ENCODE measurements at regions of chr21 and their contacts with region 1.

Region 1: DNA sequence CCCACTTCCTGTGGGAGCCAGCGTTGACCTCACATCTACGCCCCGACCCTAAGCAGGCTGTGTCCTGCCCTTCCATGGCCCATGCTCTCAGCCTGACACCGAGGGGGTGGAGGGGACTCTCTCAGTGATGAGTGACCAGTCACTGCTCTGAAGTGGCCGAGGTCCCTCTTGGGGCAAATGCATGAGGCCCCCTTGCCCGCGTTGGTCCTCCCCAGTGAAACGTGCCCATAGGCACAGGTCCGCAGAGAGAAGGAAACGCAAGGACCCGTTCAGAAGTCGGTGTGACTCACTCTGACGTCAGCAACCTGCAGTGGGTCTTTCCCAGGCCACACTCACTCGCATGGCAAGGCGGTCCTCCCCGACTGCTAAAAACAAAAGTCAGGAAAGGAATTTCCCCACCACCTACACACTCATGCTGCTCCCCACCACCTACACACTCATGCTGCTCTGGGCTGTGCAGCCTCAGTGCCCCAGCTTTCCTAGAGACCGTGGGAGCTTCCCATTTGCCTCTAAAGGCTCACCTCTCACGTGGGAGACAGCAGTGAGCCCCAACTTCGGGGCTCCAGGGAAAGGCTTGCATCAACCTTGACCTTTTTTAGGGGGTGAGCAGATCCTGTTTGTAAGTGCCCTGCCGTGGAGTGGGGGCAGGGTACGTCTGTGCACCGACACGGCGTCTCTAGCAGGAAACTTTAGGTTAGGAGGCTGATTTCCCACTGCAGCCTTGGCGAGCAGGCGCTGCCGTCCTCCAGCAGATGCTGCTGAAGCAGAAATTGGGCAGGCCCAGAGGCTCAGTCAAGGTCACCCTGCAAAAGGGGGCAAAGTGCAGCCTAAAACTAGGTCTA is 11.4 kb downstream of the UBASH3A start:
- DNase-seq: peak; percentile 99
- ATAC-seq: peak; percentile 71
- H3K4me3 Mint-ChIP-seq: peak overlapping the region; percentile 68
- H3K27ac Mint-ChIP-seq: no peak overlapping the region
- H3K4me1 Mint-ChIP-seq: peaks cover 27% of the 10 kb centered on the region
- H3K27me3 Mint-ChIP-seq: no peaks in the 10 kb centered on the region

Region 2: GRCh38 chr21:42062236-42063022 is 352.7 kb before region 1 on chr21:
- CTCF ChIA-PET with region 1: no interaction called
- POLR2A ChIA-PET with region 1: no interaction called
- intact Hi-C with region 1: loop called in 1 of 2 experiments (anchors 5 kb)
- DNase-seq: peak; percentile 86
- ATAC-seq: peak; percentile 65
- H3K4me3 Mint-ChIP-seq: peak overlapping the region; percentile 60
- H3K27ac Mint-ChIP-seq: peak overlapping the region; percentile 86
- H3K4me1 Mint-ChIP-seq: peaks cover 43% of the 10 kb centered on the region
- H3K27me3 Mint-ChIP-seq: no peaks in the 10 kb centered on the region

Region 3: GRCh38 chr21:42299324-42300044 is 115.7 kb before region 1 on chr21:
- CTCF ChIA-PET with region 1: no interaction called
- POLR2A ChIA-PET with region 1: no interaction called
- intact Hi-C with region 1: no loop called
- DNase-seq: peak; percentile 68
- ATAC-seq: peak; percentile 92
- H3K4me3 Mint-ChIP-seq: no peak overlapping the region
- H3K27ac Mint-ChIP-seq: no peak overlapping the region
- H3K4me1 Mint-ChIP-seq: peaks cover 13% of the 10 kb centered on the region
- H3K27me3 Mint-ChIP-seq: no peaks in the 10 kb centered on the region

Region 4: GRCh38 chr21:42374864-42375492 is 40.2 kb before region 1 on chr21:
- CTCF ChIA-PET with region 1: interaction called, 6 read pairs
- POLR2A ChIA-PET with region 1: interaction called, 3 read pairs
- intact Hi-C with region 1: loop called in 1 of 2 experiments (anchors 1 kb)
- DNase-seq: peak; percentile 47
- ATAC-seq: peak; percentile 31
- H3K4me3 Mint-ChIP-seq: peak overlapping the region; percentile 57
- H3K27ac Mint-ChIP-seq: peak overlapping the region; percentile 92
- H3K4me1 Mint-ChIP-seq: peaks cover 50% of the 10 kb centered on the region
- H3K27me3 Mint-ChIP-seq: no peaks in the 10 kb centered on the region

Region 5: DNA sequence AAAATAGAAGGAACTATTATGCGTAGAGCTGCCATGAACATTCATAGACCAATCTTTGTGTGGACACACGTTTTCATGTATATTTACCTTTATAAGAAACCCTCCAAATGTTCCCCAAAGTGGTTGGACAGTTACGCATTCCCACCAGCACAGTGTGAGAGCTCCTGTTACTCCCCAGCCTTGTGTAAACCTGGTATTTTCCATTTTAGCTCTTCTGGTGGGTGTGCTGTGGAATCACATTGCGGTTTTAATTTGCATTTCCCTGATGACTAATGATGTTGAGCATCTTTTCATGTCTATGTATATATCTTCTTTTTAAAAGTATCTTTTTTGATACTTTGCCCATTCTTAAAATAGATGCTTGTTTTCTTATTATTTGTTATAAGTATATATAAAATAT is 14.6 kb before region 1 on chr21:
- CTCF ChIA-PET with region 1: interaction called, 56 read pairs
- POLR2A ChIA-PET with region 1: interaction called, 15 read pairs
- intact Hi-C with region 1: loop called in 1 of 2 experiments (anchors 2 kb)
- DNase-seq: no peak
- ATAC-seq: peak; percentile 34
- H3K4me3 Mint-ChIP-seq: peak overlapping the region; percentile 48
- H3K27ac Mint-ChIP-seq: peak overlapping the region; percentile 89
- H3K4me1 Mint-ChIP-seq: peaks cover 58% of the 10 kb centered on the region
- H3K27me3 Mint-ChIP-seq: no peaks in the 10 kb centered on the region

Region 6: DNA sequence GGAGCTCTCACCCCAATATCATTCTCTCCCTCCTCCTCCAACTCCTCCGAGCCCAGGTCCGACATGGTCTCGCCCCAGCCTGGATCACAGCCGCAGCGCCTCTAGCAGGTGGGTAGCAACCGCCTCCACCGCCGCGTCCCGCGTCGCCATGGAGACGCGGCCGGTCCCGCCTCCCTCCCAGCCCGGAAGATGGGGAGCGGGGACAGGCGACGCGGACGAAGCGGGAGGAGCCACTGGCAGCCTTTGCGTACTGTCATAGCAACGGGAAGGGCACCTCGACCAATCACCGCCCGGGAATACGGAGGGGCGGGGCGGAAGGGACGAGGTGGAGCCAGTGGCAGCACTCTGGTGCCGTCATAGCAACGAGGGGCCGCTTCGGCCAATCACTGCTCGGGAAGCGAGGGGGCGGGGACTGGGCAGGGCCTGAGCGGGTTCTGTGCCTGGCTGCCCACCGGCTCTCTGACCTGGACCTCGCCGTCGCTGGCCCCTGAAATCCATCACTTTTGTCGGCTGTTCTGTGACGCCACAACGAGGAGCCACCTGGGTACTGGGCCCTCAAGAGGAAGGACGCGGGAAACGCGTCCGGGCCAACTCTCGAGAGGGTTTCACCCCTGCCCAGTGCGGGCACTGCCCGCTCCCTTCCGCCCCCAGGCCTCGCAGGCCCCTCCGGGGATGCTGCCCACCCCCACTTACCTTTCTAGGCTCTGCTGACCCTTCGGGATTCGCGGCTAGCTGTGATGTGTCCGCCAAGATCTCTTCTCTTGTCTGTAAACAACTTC is 81.2 kb after region 1 on chr21 and contains the start of gene RSPH1:
- CTCF ChIA-PET with region 1: no interaction called
- POLR2A ChIA-PET with region 1: no interaction called
- intact Hi-C with region 1: loop called in 1 of 2 experiments (anchors 1 kb)
- DNase-seq: peak; percentile 100
- ATAC-seq: peak; percentile 99
- H3K4me3 Mint-ChIP-seq: peak within 1 kb of the TSS; percentile 75
- H3K27ac Mint-ChIP-seq: peak within 1 kb of the TSS; percentile 69
- H3K4me1 Mint-ChIP-seq: peaks cover 25% of the 10 kb centered on the region
- H3K27me3 Mint-ChIP-seq: peaks cover 2% of the 10 kb centered on the region
- total RNA-seq, gene RSPH1: 0.21 to 0.34 TPM

Measured in activated CD4-positive, alpha-beta T cell treated with anti-CD3 and anti-CD28 coated beads for 36 hours (primary cell).